ENCODE measurements at regions of chr14 and their contacts with region 1.

Region 1: DNA sequence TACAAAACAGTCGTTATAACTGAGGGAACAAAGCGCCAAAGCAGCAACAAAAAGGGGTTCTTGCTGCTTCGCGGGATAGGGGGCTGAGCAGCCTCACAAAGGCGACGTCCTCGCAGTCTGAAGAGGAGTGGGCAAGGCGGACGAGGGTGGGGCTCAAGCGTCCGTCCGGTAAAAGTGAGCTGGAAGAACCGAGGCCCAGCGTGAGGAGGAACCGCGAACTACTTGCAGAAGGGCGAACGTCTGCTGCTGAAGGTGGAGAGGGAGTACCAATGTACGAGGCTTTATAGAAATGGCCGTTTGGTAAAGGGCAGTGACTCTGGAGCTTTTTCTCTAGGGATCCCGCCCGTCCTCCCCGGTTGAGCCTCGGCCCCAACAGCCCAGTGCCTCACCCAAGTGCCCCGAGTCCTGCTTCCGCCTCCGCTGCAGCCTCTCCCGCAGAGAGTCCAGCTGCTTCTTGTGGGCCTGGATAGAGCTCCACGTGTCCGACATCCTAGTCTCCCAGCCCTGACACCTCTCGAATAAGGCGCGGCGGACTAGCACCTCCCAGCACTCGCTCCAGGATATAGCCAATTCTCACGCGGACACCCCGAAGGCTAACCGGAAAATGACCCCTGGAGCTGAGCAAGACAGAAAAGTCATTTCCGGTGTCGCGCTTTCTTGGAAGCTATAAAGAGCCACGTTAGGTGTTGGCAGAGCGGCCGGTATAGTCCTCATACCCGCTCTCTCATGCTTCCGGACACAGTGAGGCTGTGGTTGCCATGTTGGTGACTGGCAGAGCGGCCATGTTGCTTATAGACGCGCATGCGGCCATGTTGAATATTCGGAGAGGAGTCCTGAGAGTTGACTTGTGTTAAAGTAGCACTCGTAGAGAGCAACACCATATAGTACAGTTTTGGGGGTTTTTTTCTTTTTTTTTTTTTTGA is at the start of gene METTL3:
- DNase-seq: peak; percentile 94 to 99
- H3K4me3 ChIP-seq: peak within 1 kb of the TSS; percentile 80 to 82
- H3K27ac ChIP-seq: peak within 1 kb of the TSS; percentile 78 to 86
- H3K4me1 ChIP-seq: peaks cover 8 to 12% of the 10 kb centered on the region in 2 donors
- H3K27me3 ChIP-seq: no peaks in the 10 kb centered on the region
- CTCF ChIP-seq: no peak
- total RNA-seq, gene METTL3: 45.0 TPM

Region 2: DNA sequence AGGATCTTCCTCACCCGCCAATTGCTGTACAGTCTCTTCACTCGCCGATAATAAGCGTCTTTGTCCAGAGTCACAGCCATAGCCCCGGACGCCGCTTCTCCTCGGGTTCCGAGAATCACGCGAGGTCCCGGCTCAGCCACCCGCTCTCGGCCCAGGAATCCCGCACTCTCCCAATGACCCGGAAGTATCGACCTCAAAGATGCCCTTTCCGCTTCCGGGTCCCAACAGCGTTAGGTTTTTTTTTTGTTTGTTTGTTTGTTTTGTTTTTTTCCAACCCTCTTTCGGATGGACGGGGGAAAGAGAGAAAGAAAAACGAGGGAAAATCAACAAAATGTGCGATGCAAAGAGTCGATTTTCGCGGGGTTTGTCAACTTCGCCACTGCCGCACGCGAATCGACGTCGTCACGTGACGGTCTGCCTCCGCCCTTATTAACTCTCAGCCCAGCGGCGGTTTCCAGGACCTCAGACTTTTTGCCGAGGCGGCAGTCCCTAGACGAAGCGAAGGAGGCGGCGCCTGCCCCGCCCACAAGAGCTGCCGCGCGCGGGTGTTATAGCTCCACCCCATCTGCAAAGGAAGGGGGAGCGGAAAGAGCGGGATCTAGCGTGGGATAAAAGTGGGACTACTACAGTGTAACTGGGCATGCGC is 127.0 kb before region 1 on chr14 and contains the start of gene SUPT16H:
- intact Hi-C with region 1: loop called (anchors 1 kb)
- DNase-seq: peak; percentile 89 to 98
- H3K4me3 ChIP-seq: peak within 1 kb of the TSS; percentile 63 to 79
- H3K27ac ChIP-seq: peak within 1 kb of the TSS; percentile 88 to 90
- H3K4me1 ChIP-seq: peaks cover 0 to 16% of the 10 kb centered on the region in 2 donors
- H3K27me3 ChIP-seq: no peaks in the 10 kb centered on the region
- CTCF ChIP-seq: no peak
- total RNA-seq, gene SUPT16H: 13.5 TPM

Region 3: DNA sequence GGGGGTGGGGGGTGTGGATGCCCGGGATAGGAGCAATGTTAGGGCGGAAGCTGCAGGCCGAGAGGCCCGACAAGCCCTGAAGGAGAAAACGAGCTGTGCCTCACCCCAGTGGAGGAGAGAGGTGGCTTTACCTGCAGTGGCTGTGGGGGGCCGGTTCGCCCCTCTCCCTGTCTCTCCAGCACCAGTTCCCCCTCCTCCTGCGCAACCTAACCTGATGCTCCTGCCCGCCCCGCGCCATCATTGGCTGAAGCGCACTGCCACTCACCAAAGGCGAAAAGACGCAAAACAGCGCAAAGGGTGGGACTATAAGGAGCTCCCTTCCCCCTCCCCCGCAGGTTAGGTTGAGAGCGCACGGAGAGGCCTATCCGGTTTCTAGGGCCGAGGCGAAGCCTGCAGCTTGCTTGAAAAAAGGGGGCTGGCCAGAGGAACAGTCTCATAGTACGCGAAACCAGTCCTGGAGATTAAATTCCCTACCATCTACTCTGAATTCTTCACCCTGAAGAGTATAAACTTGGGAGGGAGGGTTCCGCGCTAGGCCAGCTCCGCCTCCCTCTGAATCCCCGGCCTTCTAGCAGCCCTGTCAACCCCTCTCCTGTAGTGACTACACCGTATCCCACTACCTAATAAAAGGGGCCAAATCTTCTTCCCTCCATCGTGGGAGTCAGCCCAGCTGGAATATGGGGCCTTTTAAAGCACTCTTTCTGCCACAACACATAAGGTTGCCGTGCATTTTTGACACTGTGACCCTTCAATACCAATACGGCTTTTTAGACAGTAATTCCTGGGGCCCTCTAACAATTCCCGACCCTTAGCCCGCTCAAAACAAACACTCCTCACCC is 73.7 kb before region 1 on chr14:
- intact Hi-C with region 1: loop called (anchors 5 kb)
- DNase-seq: peak; percentile 95 to 99
- H3K4me3 ChIP-seq: peak overlapping the region; percentile 73 to 89
- H3K27ac ChIP-seq: peak overlapping the region; percentile 86 to 89
- H3K4me1 ChIP-seq: peaks cover 8 to 15% of the 10 kb centered on the region in 2 donors
- H3K27me3 ChIP-seq: no peaks in the 10 kb centered on the region
- CTCF ChIP-seq: no peak

Region 4: DNA sequence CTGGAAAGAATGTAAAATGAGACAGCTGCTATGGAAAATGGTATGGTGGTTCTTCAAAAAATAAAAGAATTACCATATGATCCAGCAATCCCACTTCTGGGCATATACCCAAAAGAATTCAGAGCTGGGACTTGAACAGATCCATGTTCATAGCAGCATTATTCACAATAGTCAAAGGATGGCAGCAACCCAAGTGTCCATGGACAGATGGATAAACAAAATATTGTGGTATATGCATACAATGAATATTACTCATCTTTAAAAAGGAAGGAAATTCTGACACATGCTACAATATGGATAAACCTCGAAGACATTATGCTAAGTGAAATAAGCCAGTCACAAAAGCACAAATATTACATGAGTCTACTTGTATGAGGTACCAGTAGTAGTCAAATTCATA is 43.4 kb before region 1 on chr14:
- intact Hi-C with region 1: no loop called
- DNase-seq: no peak
- H3K4me3 ChIP-seq: no peak overlapping the region
- H3K27ac ChIP-seq: no peak overlapping the region
- H3K4me1 ChIP-seq: no peaks in the 10 kb centered on the region
- H3K27me3 ChIP-seq: no peaks in the 10 kb centered on the region
- CTCF ChIP-seq: no peak

Region 5: GRCh38 chr14:21525962-21526671 is 15.1 kb after region 1 on chr14 and contains the start of gene SALL2:
- intact Hi-C with region 1: loop called (anchors 1 kb)
- DNase-seq: peak in 1 of 2 donors; percentile 86
- H3K4me3 ChIP-seq: peak within 1 kb of the TSS; percentile 59 to 88
- H3K27ac ChIP-seq: peak within 1 kb of the TSS; percentile 51 to 67
- H3K4me1 ChIP-seq: peaks cover 4 to 6% of the 10 kb centered on the region in 2 donors
- H3K27me3 ChIP-seq: no peaks in the 10 kb centered on the region
- CTCF ChIP-seq: no peak
- total RNA-seq, gene SALL2: 18.0 TPM

Region 6: DNA sequence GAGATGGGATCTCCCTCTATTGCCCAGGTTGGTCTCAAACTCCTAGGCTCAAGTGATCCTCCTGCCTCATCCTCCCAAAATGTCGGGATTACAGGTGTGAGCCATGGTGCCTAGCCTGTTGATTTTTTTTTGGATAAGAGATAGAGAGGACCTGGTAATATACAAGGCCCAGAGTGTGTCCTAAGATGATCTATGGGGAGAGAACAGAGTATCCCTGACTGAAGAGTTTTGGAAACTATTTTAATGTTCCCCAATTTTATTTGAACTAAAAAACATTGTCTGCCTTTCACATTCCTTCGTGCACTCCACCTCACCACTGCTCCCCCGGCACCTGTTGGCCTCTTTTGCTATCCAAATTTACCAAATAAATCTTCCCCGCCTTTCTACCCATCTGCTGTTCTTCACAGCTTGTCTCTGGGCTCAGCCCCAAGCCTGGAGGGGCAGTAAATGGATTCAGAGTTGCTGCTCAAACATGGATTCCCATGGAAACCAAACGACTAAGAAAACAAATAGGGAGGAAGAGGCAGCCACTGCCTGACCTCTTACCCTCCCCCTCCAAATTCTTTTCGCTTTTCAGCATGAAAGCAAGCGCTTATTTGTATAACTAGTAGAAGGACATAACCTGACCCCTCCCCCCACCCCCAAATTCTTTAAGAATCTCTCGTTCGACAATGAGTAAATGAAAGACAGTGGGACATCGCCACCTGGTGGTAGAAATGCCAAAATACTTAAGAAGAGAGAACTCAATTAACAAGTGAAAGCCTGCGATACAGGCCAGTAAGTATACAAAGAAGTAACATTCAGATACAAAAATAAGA is 46.3 kb after region 1 on chr14:
- intact Hi-C with region 1: loop called (anchors 5 kb)
- DNase-seq: peak in 1 of 2 donors; percentile 90
- H3K4me3 ChIP-seq: peak overlapping the region; percentile 48 to 57
- H3K27ac ChIP-seq: peak overlapping the region; percentile 34 to 41
- H3K4me1 ChIP-seq: peaks cover 0 to 3% of the 10 kb centered on the region in 2 donors
- H3K27me3 ChIP-seq: no peaks in the 10 kb centered on the region
- CTCF ChIP-seq: peak; percentile 61 to 67 (median 64)

Region 7: GRCh38 chr14:21668377-21668776 is 157.4 kb after region 1 on chr14:
- intact Hi-C with region 1: no loop called
- DNase-seq: no peak
- H3K4me3 ChIP-seq: no peak overlapping the region
- H3K27ac ChIP-seq: no peak overlapping the region
- H3K4me1 ChIP-seq: no peaks in the 10 kb centered on the region
- H3K27me3 ChIP-seq: no peaks in the 10 kb centered on the region
- CTCF ChIP-seq: no peak

Region 8: DNA sequence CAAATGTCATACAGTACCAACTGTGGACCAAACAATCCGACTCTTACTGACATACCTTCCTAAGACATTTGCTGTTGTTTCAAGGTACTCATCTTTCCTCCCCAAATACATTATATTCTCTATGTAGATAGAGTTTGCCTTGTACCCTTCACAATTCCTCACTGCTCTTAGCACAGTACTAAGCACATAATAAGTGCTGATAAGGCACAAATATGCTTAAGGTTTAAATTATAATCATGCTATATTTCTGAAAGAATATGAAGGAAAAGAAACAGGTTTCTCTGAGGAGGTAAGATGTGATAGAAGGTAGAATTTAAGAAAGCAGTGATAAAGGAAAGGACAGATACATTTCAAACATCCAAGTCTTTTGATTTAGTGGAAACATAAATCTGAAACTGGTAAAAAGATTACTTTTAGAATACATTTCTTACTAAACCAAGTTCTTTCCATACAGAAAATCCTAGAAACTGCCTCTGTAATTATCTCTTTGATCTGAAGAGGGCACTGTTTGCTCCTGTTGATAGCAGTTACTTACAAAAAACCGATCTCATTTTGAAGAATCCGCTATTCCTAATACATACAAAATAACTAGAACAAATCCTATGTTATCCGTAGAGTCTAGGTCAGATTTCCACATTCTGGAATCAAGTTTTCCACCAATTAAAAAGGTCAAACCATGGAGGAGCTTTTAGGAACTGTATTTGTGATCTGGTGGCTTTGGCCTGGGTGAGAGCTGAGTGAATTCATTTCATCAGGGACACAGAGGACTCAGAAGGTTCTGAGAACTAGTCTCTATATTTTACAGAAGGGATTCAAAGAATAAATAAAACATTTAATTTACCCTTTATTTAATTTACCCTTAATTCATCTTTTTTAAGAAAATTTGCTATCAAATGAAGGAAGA is 766.2 kb after region 1 on chr14:
- intact Hi-C with region 1: no loop called
- DNase-seq: no peak
- H3K4me3 ChIP-seq: no peak overlapping the region
- H3K27ac ChIP-seq: no peak overlapping the region
- H3K4me1 ChIP-seq: no peaks in the 10 kb centered on the region
- H3K27me3 ChIP-seq: no peaks in the 10 kb centered on the region
- CTCF ChIP-seq: peak in 2 of 3 experiments; percentile 57 to 67

Measured in ascending aorta (tissue), 2 donors.